MCF 10A (cell line): ENCODE measurements at regions of chr2 and their contacts with region 1.

Region 1: GRCh38 chr2:227766373-227766883 is 20.7 kb downstream of the SCYGR8 start:
- DNase-seq: peak; percentile 86
- H3K4me3 Mint-ChIP-seq: no peak overlapping the region
- H3K27ac Mint-ChIP-seq: no peak overlapping the region
- H3K4me1 Mint-ChIP-seq: peaks cover 5% of the 10 kb centered on the region
- H3K27me3 Mint-ChIP-seq: no peaks in the 10 kb centered on the region
- CTCF ChIP-seq: peak; percentile 80

Region 2: DNA sequence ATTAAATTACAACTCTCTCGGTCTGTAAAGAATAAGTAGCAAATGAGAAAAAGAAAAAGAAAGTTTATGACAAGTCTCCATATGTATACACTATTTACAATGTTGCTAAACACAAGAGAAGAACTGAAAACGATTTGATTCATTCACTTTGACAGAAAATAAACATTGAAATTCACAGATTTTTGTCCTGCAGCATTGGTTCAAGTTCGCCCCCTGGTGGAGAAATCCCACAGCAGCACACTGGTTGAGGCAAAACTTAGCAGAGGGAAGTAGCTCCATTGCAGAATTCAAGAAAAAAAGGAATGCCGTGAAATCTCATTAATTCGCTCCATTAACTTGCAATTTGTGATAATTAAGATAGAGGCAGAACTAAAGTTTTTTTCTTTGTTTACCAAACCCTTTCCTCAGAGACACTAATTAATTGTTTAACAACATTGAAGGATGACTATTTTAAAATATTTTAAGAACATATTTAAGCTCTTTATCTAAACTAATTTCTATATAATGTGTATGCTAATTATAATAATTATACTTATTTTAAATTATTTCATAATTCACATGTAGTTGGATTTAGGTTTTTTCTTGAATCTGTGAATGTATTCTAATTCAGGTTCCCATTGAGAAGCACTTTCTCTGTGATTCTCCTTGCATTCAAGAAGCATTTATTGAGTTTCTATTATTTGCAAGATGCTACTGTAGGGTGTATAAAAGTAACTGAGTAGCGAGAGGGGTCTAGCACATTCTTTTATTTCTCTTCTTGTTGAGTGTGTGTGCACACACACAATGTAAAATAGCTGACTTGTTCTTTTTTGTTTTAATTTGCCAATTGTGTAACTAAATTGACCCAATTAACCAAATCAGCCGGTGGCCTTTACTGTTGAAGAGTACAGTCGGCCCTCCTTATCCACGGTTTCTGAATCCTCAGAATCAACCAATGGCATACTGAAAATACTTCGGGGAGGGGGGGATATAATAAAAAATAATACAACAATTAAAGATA is 527.9 kb before region 1 on chr2:
- CTCF ChIA-PET with region 1: interaction called, 3 read pairs
- POLR2A ChIA-PET with region 1: no interaction called
- intact Hi-C with region 1: loop called (anchors 1 kb)
- DNase-seq: peak; percentile 73
- H3K4me3 Mint-ChIP-seq: no peak overlapping the region
- H3K27ac Mint-ChIP-seq: no peak overlapping the region
- H3K4me1 Mint-ChIP-seq: no peaks in the 10 kb centered on the region
- H3K27me3 Mint-ChIP-seq: peaks cover 18% of the 10 kb centered on the region
- CTCF ChIP-seq: peak; percentile 87

Region 3: DNA sequence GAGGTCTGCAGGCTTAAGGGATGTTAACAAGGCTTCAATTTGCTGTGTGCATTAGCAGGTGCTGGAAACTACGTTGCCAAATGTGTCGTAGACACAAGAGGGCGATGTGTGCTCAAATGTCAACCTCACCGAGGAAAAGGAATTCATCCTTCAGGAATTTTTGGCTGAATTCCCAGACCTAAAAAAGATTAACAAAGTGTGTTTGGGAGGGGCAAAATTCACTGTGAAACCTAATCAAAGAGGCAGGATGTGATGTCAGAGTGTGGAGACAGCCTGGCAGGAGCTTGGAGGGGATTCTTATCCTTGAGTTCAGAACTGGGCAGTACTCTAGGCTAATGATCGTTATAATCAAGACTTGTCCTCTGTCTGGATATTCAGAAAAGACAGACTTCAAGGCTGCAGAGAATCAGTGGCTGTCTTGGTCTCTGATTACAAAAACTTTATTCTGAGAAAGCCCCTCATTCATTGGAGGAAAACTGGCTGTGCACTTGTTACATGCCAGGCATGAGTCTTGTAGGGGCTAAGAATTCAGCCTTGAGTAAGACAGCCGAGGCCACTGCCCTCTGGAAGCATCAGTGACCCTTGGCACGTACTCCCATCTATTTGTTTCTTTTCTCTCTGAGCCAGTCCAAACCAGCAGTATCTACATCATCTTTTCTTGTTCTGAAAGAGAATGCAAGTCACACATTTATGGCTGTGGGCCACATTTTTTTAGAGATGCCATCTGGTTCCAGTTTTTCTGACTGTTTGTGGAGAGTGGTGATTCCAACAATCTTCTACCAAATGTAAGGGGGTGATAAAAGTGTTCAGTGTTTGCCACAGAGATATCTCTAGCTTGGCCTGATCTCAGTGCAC is 360.0 kb before region 1 on chr2:
- CTCF ChIA-PET with region 1: interaction called, 49 read pairs
- POLR2A ChIA-PET with region 1: interaction called, 5 read pairs
- intact Hi-C with region 1: loop called (anchors 1 kb)
- DNase-seq: peak; percentile 98
- H3K4me3 Mint-ChIP-seq: peak overlapping the region; percentile 21
- H3K27ac Mint-ChIP-seq: peak overlapping the region; percentile 38
- H3K4me1 Mint-ChIP-seq: peaks cover 41% of the 10 kb centered on the region
- H3K27me3 Mint-ChIP-seq: no peaks in the 10 kb centered on the region
- CTCF ChIP-seq: peak; percentile 67

Region 4: DNA sequence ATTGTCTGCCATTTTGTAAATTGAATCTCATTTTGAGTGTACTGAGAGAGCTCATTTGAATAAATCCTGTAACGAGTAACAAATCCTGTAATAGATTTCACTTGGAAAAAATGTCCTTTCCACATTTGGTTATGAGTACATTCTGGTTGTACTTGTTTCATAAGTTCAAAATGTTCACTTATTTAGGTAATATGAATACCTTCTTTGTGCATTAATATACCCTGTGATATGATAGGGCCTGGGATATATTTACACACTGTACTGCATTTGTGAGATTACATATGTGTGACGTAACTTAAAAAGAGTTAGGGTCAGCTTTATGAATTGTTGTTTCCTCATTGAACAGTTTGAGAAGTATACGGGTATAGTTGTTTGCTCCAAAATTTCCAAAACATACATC is 278.4 kb before region 1 on chr2:
- CTCF ChIA-PET with region 1: interaction called, 10 read pairs
- POLR2A ChIA-PET with region 1: no interaction called
- intact Hi-C with region 1: no loop called
- DNase-seq: no peak
- H3K4me3 Mint-ChIP-seq: no peak overlapping the region
- H3K27ac Mint-ChIP-seq: no peak overlapping the region
- H3K4me1 Mint-ChIP-seq: peaks cover 14% of the 10 kb centered on the region
- H3K27me3 Mint-ChIP-seq: no peaks in the 10 kb centered on the region
- CTCF ChIP-seq: no peak

Region 5: DNA sequence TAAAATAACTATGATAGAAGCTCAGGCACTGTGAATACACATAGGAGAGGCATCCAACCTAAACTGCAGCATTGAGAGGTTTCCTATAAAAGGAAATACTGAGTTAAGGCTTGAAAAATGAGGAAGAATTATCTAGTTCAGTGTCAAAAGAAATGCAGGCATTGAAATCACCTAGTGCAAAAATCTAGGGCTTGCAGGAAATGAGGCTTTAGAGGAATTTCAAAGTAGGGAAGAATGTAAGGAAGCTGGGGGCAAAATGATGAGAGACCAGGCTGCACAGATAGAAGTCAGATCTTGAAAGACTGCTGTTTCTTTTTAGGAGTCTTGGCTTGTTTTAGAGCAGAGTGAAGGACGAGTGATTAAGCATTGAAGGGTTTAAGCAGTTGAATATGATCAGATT is 195.8 kb before region 1 on chr2:
- CTCF ChIA-PET with region 1: no interaction called
- POLR2A ChIA-PET with region 1: no interaction called
- intact Hi-C with region 1: no loop called
- DNase-seq: no peak
- H3K4me3 Mint-ChIP-seq: no peak overlapping the region
- H3K27ac Mint-ChIP-seq: no peak overlapping the region
- H3K4me1 Mint-ChIP-seq: no peaks in the 10 kb centered on the region
- H3K27me3 Mint-ChIP-seq: no peaks in the 10 kb centered on the region
- CTCF ChIP-seq: no peak

Region 6: GRCh38 chr2:227617316-227618230 is 148.9 kb before region 1 on chr2 and contains the start of gene SCYGR4:
- CTCF ChIA-PET with region 1: no interaction called
- POLR2A ChIA-PET with region 1: no interaction called
- intact Hi-C with region 1: no loop called
- DNase-seq: no peak
- H3K4me3 Mint-ChIP-seq: no peak within 1 kb of the TSS
- H3K27ac Mint-ChIP-seq: no peak within 1 kb of the TSS
- H3K4me1 Mint-ChIP-seq: no peaks in the 10 kb centered on the region
- H3K27me3 Mint-ChIP-seq: peaks cover 16% of the 10 kb centered on the region
- CTCF ChIP-seq: no peak
- total RNA-seq, gene SCYGR4: not detected in 2 replicates

Region 7: GRCh38 chr2:227783404-227784138 is 17.1 kb after region 1 on chr2:
- CTCF ChIA-PET with region 1: interaction called, 19 read pairs
- POLR2A ChIA-PET with region 1: interaction called, 3 read pairs
- intact Hi-C with region 1: no loop called
- DNase-seq: no peak
- H3K4me3 Mint-ChIP-seq: no peak overlapping the region
- H3K27ac Mint-ChIP-seq: no peak overlapping the region
- H3K4me1 Mint-ChIP-seq: peaks cover 15% of the 10 kb centered on the region
- H3K27me3 Mint-ChIP-seq: no peaks in the 10 kb centered on the region
- CTCF ChIP-seq: no peak

Region 8: DNA sequence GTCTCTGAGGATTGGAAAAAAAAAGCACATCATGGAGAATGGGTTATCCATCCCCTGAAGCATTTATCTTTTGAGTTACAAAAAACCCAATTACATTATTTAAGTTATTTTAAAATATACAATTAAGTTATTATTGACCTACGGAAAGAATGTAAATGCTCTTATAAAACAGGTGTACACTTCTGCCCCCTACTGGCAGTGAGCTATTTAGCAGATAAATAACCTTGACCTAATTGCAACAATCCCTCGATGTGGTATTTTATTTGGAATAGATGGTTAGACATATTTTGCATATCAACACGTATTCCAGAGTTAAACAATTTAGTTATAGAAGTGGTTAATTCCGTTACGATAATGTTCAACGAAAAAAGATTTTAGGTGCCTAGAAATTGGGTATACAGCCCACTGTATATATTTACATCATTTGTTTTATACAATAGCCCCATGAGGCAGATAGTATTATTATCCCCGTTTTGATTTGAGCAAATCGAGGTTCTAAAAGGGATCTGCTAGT is 95.9 kb after region 1 on chr2:
- CTCF ChIA-PET with region 1: interaction called, 26 read pairs
- POLR2A ChIA-PET with region 1: interaction called, 3 read pairs
- intact Hi-C with region 1: loop called (anchors 1 kb)
- DNase-seq: peak; percentile 80
- H3K4me3 Mint-ChIP-seq: peak overlapping the region; percentile 36
- H3K27ac Mint-ChIP-seq: peak overlapping the region; percentile 24
- H3K4me1 Mint-ChIP-seq: peaks cover 44% of the 10 kb centered on the region
- H3K27me3 Mint-ChIP-seq: no peaks in the 10 kb centered on the region
- CTCF ChIP-seq: peak; percentile 64

Region 9: GRCh38 chr2:227886149-227886548 is 119.7 kb after region 1 on chr2:
- CTCF ChIA-PET with region 1: no interaction called
- POLR2A ChIA-PET with region 1: no interaction called
- intact Hi-C with region 1: no loop called
- DNase-seq: no peak
- H3K4me3 Mint-ChIP-seq: no peak overlapping the region
- H3K27ac Mint-ChIP-seq: no peak overlapping the region
- H3K4me1 Mint-ChIP-seq: peaks cover 13% of the 10 kb centered on the region
- H3K27me3 Mint-ChIP-seq: no peaks in the 10 kb centered on the region
- CTCF ChIP-seq: no peak

Region 10: DNA sequence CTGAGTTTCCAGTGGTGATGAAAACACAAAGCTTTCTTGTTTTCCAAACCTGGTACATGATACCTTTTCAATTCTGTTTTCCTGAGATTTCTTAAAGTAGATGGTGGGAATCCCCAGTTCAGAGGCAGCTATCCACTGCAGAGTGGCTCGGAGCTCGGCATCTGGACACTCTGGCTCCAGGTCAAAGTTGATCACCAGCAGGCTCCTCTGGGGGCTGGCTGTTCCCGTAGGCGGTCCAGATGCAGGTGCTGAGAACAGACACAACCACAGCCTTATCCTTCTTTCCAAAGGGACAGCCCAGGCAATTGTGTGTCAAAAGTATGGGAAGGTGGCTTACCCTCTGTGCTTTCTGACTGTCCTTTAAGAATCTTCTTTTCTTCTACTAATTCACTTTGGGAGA is 224.5 kb after region 1 on chr2:
- CTCF ChIA-PET with region 1: no interaction called
- POLR2A ChIA-PET with region 1: no interaction called
- intact Hi-C with region 1: no loop called
- DNase-seq: no peak
- H3K4me3 Mint-ChIP-seq: no peak overlapping the region
- H3K27ac Mint-ChIP-seq: no peak overlapping the region
- H3K4me1 Mint-ChIP-seq: no peaks in the 10 kb centered on the region
- H3K27me3 Mint-ChIP-seq: peaks cover 24% of the 10 kb centered on the region
- CTCF ChIP-seq: no peak